Right lobe of liver (tissue), 6 donors: ENCODE measurements at regions of chr1 and their contacts with region 1.

Region 1: DNA sequence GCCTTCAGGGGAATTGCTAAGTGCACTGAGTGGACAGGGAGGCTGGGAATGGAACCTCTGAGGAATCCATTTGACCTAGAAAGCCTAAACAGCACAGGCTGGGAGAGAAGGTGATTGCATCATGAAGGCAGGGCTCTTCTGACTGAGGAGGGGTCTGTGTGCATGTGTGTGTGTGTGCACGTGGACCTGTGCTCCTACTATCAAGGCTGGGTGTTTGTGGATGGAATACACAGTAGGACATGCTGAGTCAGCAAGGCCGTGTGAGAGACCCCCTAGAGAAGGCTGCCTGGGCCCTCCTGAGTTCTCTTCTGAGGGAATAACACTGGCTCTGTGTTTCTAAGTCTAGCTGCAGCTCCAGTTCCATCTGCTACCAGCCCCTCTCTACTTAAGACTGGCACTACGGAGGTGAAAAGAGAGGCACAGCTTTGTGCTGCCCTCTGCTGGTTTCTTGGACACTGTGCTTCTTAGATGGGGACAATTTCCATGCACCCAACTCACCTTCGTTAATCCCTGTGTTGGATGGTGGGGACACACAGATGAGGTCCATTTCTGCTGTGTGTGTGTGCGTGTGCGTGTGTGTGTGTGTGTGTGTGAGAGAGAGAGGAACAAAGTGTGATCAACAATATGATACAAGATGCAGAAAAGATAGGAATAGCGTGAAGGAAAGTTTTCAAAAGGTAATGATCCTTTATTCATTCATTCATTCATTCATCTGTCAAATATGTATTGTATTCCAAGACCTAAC is 6.2 kb upstream of the EFCAB14 start:
- DNase-seq: peak in 2 of 3 donors; percentile 44 to 65
- ATAC-seq: peak; percentile 96 to 99 (median 97)
- H3K4me3 ChIP-seq: no peak overlapping the region
- H3K27ac ChIP-seq: no peak overlapping the region
- H3K4me1 ChIP-seq: no peaks in the 10 kb centered on the region
- H3K27me3 ChIP-seq: peaks cover 0 to 4% of the 10 kb centered on the region in 2 donors
- CTCF ChIP-seq: peak; percentile 78 to 84 (median 80)
- POLR2A ChIP-seq: no peak

Region 2: GRCh38 chr1:46622344-46622743 is 102.8 kb before region 1 on chr1:
- intact Hi-C with region 1: loop called (anchors 5 to 10 kb)
- DNase-seq: peak in 1 of 3 donors; percentile 57
- ATAC-seq: peak; percentile 77 to 84 (median 80)
- H3K4me3 ChIP-seq: no peak overlapping the region
- H3K27ac ChIP-seq: no peak overlapping the region
- H3K4me1 ChIP-seq: no peaks in the 10 kb centered on the region
- H3K27me3 ChIP-seq: no peaks in the 10 kb centered on the region
- CTCF ChIP-seq: peak; percentile 38 to 73 (median 58)
- POLR2A ChIP-seq: no peak

Region 3: GRCh38 chr1:46830665-46831322 is 105.6 kb after region 1 on chr1:
- intact Hi-C with region 1: no loop called
- DNase-seq: no peak
- ATAC-seq: no peak
- H3K4me3 ChIP-seq: no peak overlapping the region
- H3K27ac ChIP-seq: no peak overlapping the region
- H3K4me1 ChIP-seq: no peaks in the 10 kb centered on the region
- H3K27me3 ChIP-seq: no peaks in the 10 kb centered on the region
- CTCF ChIP-seq: no peak
- POLR2A ChIP-seq: no peak